CD14-positive monocyte (primary cell): ENCODE measurements at regions of chr11 and their contacts with region 1.

Region 1: GRCh38 chr11:34512840-34513681 is 533 bp downstream of the ELF5 start:
- DNase-seq: peak; percentile 21 to 49 (median 26)
- H3K4me3 ChIP-seq: no peak overlapping the region
- H3K4me3 Mint-ChIP-seq: no peak overlapping the region
- H3K27ac ChIP-seq: no peak overlapping the region
- H3K27ac Mint-ChIP-seq: peak overlapping the region in 2 of 7 donors; percentile 35 to 59
- H3K4me1 ChIP-seq: peaks cover 21 to 24% of the 10 kb centered on the region in 2 donors
- H3K4me1 Mint-ChIP-seq: peaks cover 30% of the 10 kb centered on the region
- H3K27me3 ChIP-seq: no peaks in the 10 kb centered on the region
- H3K27me3 Mint-ChIP-seq: peaks cover 0 to 2% (median 0%) of the 10 kb centered on the region in 3 donors
- CTCF ChIP-seq: peak; percentile 77

Region 2: DNA sequence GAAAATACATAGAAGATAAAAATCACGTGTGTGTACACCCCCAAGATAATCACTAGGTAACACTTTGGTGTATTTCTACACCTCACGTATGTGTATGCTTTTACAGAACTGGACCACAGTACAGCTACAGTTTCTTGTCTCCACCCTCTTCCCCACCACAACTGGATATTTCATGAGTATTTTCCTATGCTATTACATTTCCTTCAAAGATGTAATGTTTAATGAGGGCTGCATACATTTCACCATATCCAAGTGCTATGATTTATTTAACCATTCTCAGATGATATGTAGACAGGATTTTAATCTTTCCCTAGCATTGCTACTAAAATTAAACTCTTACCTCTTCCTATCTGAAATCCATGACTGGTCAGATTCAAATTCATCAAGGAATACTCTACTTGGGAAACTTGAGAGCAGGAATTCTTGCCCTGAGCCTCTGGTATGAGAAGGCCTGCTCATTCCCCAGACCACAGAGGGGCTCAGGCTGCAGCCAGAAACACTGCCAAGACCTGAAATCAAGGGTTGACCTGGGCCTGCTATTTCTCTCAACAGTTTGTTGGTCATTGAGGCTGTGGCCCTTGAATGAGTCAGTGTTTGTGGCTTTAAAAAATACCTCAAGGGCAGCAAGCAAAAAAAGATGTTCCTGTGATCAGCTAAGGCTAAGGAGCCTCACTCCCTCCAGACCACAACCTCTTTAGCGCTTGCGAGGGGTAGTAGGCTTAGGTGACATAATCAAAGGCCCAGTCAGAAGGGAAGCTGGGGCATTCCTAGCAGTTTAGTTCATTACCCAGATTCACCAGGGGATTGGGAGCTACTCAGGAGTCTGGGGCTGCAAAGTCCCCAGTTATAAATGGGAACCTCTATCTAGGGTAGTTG is 210.8 kb before region 1 on chr11:
- intact Hi-C with region 1: no loop called
- DNase-seq: peak in 1 of 3 donors; percentile 52
- H3K4me3 ChIP-seq: no peak overlapping the region
- H3K4me3 Mint-ChIP-seq: no peak overlapping the region
- H3K27ac ChIP-seq: peak overlapping the region in 1 of 2 donors; percentile 81
- H3K27ac Mint-ChIP-seq: peak overlapping the region in 2 of 7 donors; percentile 26 to 37
- H3K4me1 ChIP-seq: peaks cover 31 to 33% of the 10 kb centered on the region in 2 donors
- H3K4me1 Mint-ChIP-seq: peaks cover 32% of the 10 kb centered on the region
- H3K27me3 ChIP-seq: no peaks in the 10 kb centered on the region
- H3K27me3 Mint-ChIP-seq: no peaks in the 10 kb centered on the region
- CTCF ChIP-seq: no peak

Region 3: DNA sequence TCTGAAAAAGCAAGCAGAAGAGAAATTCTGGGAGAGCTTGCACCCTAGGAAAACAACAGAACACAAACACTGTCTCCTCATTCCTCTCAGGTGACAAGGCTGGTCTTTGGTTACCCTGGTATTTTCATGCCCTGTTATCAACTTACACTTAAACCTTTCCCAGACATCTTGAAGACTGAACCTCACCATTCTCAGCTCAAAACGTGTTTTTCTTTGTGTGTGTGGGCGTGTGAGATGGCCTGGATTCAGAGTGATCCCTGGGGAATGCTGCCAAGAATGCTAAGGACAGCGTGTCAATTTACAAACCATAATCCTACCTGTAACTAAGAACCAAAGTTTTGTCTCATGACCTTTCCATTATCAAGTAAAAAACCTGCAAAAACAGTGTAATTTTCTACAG is 32.7 kb before region 1 on chr11:
- intact Hi-C with region 1: no loop called
- DNase-seq: no peak
- H3K4me3 ChIP-seq: no peak overlapping the region
- H3K4me3 Mint-ChIP-seq: no peak overlapping the region
- H3K27ac ChIP-seq: no peak overlapping the region
- H3K27ac Mint-ChIP-seq: no peak overlapping the region
- H3K4me1 ChIP-seq: no peaks in the 10 kb centered on the region
- H3K4me1 Mint-ChIP-seq: peaks cover 5% of the 10 kb centered on the region
- H3K27me3 ChIP-seq: no peaks in the 10 kb centered on the region
- H3K27me3 Mint-ChIP-seq: peaks cover 0 to 7% (median 1%) of the 10 kb centered on the region in 3 donors
- CTCF ChIP-seq: no peak

Region 4: DNA sequence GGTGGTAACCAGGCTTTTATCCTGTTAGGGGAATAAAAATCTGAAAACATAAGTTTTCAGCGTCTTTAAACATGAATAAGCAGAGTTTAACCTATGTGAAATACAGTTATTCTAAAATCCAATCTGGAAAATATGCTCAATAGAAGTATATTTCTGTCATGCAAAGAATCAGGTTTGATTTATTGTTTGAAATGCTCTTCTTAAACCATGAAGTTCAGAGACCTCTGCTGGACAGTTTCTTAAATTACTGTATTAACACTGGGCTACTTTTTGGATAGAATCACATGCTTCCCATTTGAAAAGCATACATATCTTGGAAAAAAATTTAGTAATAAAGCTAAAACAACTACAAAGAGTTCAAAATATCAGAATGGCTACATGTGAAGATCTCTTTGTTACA is 377.8 kb after region 1 on chr11:
- intact Hi-C with region 1: loop called in 1 of 2 experiments (anchors 10 kb)
- DNase-seq: peak in 2 of 3 donors; percentile 10 to 31
- H3K4me3 ChIP-seq: no peak overlapping the region
- H3K4me3 Mint-ChIP-seq: no peak overlapping the region
- H3K27ac ChIP-seq: no peak overlapping the region
- H3K27ac Mint-ChIP-seq: no peak overlapping the region
- H3K4me1 ChIP-seq: no peaks in the 10 kb centered on the region
- H3K4me1 Mint-ChIP-seq: no peaks in the 10 kb centered on the region
- H3K27me3 ChIP-seq: no peaks in the 10 kb centered on the region
- H3K27me3 Mint-ChIP-seq: no peaks in the 10 kb centered on the region
- CTCF ChIP-seq: peak; percentile 35